ENCODE measurements at regions of chr2 and their contacts with region 1.

Region 1: GRCh38 chr2:44191739-44192138 is 23.1 kb downstream of the PPM1B start:
- DNase-seq: no peak
- ATAC-seq: no peak
- H3K4me3 ChIP-seq: no peak overlapping the region
- H3K4me3 Mint-ChIP-seq: peak overlapping the region; percentile 15
- H3K27ac ChIP-seq: no peak overlapping the region
- H3K27ac Mint-ChIP-seq: peak overlapping the region; percentile 2
- H3K4me1 ChIP-seq: peaks cover 31 to 43% of the 10 kb centered on the region in 2 donors
- H3K4me1 Mint-ChIP-seq: peaks cover 54% of the 10 kb centered on the region
- H3K27me3 ChIP-seq: no peaks in the 10 kb centered on the region
- H3K27me3 Mint-ChIP-seq: no peaks in the 10 kb centered on the region
- CTCF ChIP-seq: no peak

Region 2: DNA sequence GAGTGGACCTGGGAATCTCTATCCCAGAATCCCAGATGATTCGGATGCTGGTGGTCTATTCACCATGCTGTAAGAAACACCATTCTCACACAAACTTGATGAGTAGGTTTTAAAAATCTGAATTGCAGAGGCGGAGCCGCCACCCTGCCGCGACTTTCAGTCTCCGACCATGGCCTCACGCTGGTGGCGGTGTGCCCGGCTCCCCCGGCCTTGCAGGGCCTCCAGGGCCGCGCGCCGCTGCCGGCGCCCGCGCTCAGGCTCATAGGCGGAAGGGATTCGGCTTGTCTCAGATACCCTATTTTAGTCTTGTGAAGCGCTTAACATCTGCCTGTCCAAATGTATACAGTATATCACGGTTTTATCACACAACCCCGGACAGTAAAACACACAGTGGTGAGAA is 25.6 kb before region 1 on chr2:
- CTCF ChIA-PET with region 1: no interaction called
- POLR2A ChIA-PET with region 1: no interaction called
- intact Hi-C with region 1: no loop called
- DNase-seq: no peak
- ATAC-seq: no peak
- H3K4me3 ChIP-seq: no peak overlapping the region
- H3K4me3 Mint-ChIP-seq: no peak overlapping the region
- H3K27ac ChIP-seq: no peak overlapping the region
- H3K27ac Mint-ChIP-seq: no peak overlapping the region
- H3K4me1 ChIP-seq: peaks cover 14 to 16% of the 10 kb centered on the region in 2 donors
- H3K4me1 Mint-ChIP-seq: peaks cover 15% of the 10 kb centered on the region
- H3K27me3 ChIP-seq: no peaks in the 10 kb centered on the region
- H3K27me3 Mint-ChIP-seq: no peaks in the 10 kb centered on the region
- CTCF ChIP-seq: no peak

Region 3: DNA sequence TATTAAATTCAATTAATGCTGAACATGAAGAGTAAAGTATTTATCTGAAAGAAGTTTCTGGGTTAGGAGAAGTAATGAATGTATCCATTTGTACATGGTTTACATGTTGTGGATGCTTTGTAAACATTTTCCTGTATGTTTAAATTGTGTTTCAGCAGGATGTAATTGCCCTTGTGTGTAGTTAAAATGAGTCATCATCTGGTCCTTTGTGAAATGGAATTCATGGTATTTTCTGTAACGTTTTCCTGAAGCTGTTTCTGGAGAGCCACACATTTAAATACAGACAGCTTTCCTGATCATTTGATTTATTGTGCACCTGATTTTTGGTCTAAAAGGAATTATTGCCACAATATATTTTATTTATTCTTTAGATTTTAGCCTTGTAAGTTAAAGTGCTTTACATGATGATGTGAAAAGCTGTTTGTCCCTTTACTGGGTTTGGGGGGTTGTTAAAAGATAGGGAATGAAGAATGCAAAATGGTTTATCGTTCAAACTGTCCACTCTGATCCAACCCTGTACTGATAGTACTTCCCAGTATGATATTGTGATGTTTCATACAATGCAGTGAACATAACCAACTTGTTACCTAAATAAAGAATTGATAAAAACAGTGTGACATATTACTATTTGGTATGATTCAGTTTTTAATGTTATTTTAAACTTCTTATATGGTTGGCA is 41.9 kb after region 1 on chr2:
- CTCF ChIA-PET with region 1: no interaction called
- POLR2A ChIA-PET with region 1: no interaction called
- intact Hi-C with region 1: loop called (anchors 5 kb)
- DNase-seq: no peak
- ATAC-seq: no peak
- H3K4me3 ChIP-seq: no peak overlapping the region
- H3K4me3 Mint-ChIP-seq: no peak overlapping the region
- H3K27ac ChIP-seq: no peak overlapping the region
- H3K27ac Mint-ChIP-seq: no peak overlapping the region
- H3K4me1 ChIP-seq: peaks cover 16 to 18% of the 10 kb centered on the region in 2 donors
- H3K4me1 Mint-ChIP-seq: peaks cover 24% of the 10 kb centered on the region
- H3K27me3 ChIP-seq: no peaks in the 10 kb centered on the region
- H3K27me3 Mint-ChIP-seq: no peaks in the 10 kb centered on the region
- CTCF ChIP-seq: no peak

Region 4: GRCh38 chr2:45315861-45316260 is 1124.1 kb after region 1 on chr2:
- CTCF ChIA-PET with region 1: no interaction called
- POLR2A ChIA-PET with region 1: no interaction called
- intact Hi-C with region 1: loop called (anchors 10 kb)
- DNase-seq: no peak
- ATAC-seq: no peak
- H3K4me3 ChIP-seq: no peak overlapping the region
- H3K4me3 Mint-ChIP-seq: no peak overlapping the region
- H3K27ac ChIP-seq: no peak overlapping the region
- H3K27ac Mint-ChIP-seq: no peak overlapping the region
- H3K4me1 ChIP-seq: no peaks in the 10 kb centered on the region
- H3K4me1 Mint-ChIP-seq: no peaks in the 10 kb centered on the region
- H3K27me3 ChIP-seq: no peaks in the 10 kb centered on the region
- H3K27me3 Mint-ChIP-seq: peaks cover 17% of the 10 kb centered on the region
- CTCF ChIP-seq: no peak

Measured in B cell (primary cell).